AG04449 (cell line): ENCODE measurements at regions of chr2 and their contacts with region 1.

Region 1: GRCh38 chr2:37672104-37672869 is 845 bp upstream of the CDC42EP3 start:
- DNase-seq: peak; percentile 75
- H3K4me3 ChIP-seq: peak overlapping the region; percentile 91
- CTCF ChIP-seq: no peak

Region 2: DNA sequence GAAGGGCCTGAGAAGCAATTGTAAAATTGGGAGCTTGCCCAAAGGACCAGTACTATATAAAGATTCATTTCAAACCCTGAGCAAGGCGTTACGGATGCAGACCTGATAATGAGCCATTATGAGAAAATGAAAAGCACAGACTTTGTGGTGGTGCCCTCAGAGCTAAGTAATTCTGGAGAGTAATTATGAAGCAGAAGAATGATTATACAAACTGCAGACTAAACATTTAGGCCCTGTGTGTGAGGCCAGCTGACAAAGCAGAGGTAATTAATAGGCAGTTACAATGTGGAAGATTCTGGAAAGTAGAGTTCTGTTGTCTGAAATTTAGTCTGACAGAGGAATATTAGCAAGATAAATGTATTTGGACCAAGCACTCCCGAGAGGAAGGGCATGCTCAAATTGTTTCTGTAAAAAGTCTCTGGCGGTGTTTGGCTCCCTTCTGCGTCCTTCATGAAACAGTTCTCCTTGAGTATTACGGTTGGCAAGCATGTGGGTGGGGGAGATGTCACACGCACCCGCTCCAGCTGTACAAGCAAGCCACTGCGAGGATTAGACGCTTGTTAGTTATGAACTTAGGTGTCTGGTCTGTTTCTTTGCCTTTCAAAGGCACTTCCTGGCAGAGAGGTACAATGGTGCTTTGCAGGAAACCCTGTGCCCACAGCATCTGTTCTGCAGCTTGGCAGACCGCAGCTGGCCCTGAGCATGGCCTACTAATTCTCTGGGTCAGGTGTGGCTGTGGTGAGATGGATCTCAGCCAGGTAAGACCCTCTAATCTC is 46.3 kb before region 1 on chr2:
- CTCF ChIA-PET with region 1: no interaction called
- POLR2A ChIA-PET with region 1: no interaction called
- DNase-seq: no peak
- H3K4me3 ChIP-seq: no peak overlapping the region
- CTCF ChIP-seq: no peak

Region 3: DNA sequence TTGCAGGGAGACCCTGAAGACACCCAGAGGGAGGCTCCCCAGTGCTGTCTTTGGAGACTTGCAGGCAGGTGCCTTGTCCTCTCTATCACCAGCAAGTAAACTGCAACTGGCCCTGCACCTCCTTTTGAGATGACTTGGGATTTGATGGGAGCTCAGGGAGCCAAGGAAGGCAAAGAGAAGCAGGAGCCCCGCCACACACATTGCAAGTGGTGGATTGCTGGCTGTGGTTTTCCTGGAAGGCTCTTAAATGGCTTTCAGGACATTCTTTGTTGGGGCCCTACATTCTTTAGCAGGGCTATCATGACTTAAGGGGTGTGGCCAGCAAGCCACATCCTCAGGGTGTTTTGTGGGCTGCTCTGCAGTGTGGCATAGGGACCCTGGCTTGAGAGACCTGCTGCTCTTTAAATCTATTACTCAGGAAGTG is 39.0 kb after region 1 on chr2:
- CTCF ChIA-PET with region 1: interaction called, 3 read pairs
- POLR2A ChIA-PET with region 1: interaction called, 25 read pairs
- DNase-seq: peak; percentile 86
- H3K4me3 ChIP-seq: no peak overlapping the region
- CTCF ChIP-seq: no peak

Region 4: GRCh38 chr2:37733251-37733650 is 61.0 kb after region 1 on chr2:
- CTCF ChIA-PET with region 1: no interaction called
- POLR2A ChIA-PET with region 1: interaction called, 16 read pairs
- DNase-seq: no peak
- H3K4me3 ChIP-seq: no peak overlapping the region
- CTCF ChIP-seq: no peak

Region 5: GRCh38 chr2:37767956-37768925 is 96.0 kb after region 1 on chr2:
- CTCF ChIA-PET with region 1: interaction called, 3 read pairs
- POLR2A ChIA-PET with region 1: interaction called, 13 read pairs
- DNase-seq: peak; percentile 91
- H3K4me3 ChIP-seq: no peak overlapping the region
- CTCF ChIP-seq: no peak

Region 6: DNA sequence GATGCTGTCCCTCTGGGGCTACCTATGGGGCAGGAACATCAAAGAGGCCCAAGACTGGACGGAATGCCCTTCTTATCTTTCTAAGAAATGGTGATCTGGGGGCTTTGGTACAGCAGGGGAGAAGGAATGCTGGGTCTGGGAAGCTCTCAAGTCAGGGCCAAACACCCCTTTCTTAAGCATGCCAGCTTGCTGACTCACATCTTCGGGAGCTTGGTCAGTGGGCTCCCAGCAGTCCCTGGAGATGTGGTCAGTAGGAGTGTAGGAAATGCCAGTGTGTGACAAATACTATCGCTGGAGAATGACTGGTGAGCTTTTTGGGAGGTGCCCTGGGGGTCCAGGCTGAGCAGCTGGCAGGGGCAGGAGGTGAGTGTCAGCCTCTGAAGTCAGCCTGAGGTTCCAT is 104.2 kb after region 1 on chr2:
- CTCF ChIA-PET with region 1: interaction called, 5 read pairs
- POLR2A ChIA-PET with region 1: interaction called, 35 read pairs
- DNase-seq: peak; percentile 87
- H3K4me3 ChIP-seq: no peak overlapping the region
- CTCF ChIP-seq: no peak